Activated T-helper 1 cell treated with anti-CD3 and anti-CD28 coated beads, Interleukin-12 subunit alpha, Interleukin-12 subunit beta, Interleukin-2, Interleukin-4 antibody, amounts not matched to agents 30 ng/mL and 10 ng/mL and 1 ng/mL, durations not matched to agents 14 hours and 24 hours and 36 hours (primary cell): ENCODE measurements at regions of chr2 and their contacts with region 1.

Region 1: GRCh38 chr2:113138428-113139322 is 11.3 kb downstream of the IL1RN start:
- DNase-seq: peak; percentile 64
- H3K4me3 Mint-ChIP-seq: peak overlapping the region; percentile 11
- H3K27ac Mint-ChIP-seq: peak overlapping the region; percentile 51
- H3K4me1 Mint-ChIP-seq: peaks cover 35% of the 10 kb centered on the region
- H3K27me3 Mint-ChIP-seq: peaks cover 6% of the 10 kb centered on the region

Region 2: DNA sequence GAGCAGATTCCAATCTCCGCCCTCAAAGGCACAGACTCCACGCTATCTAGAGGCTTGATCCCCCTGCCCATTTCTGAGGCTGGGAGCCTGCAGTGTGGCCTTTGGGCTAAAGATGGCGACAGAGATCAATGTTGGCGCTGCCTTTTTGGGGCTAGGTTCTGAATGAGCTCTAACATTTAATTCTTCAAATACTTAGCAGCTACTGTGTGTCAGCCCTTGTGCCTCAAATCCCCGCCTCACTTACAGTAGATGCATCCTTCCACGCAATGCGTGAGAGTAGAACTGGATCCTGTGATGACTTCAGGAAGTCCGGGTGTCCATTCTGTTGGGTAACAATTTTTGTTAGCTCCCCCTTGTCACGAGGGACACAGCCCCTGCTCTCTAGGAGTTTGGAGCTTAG is 58.5 kb before region 1 on chr2:
- intact Hi-C with region 1: loop called (anchors 1 kb)
- DNase-seq: peak; percentile 28
- H3K4me3 Mint-ChIP-seq: no peak overlapping the region
- H3K27ac Mint-ChIP-seq: no peak overlapping the region
- H3K4me1 Mint-ChIP-seq: peaks cover 17% of the 10 kb centered on the region
- H3K27me3 Mint-ChIP-seq: peaks cover 2% of the 10 kb centered on the region

Region 3: DNA sequence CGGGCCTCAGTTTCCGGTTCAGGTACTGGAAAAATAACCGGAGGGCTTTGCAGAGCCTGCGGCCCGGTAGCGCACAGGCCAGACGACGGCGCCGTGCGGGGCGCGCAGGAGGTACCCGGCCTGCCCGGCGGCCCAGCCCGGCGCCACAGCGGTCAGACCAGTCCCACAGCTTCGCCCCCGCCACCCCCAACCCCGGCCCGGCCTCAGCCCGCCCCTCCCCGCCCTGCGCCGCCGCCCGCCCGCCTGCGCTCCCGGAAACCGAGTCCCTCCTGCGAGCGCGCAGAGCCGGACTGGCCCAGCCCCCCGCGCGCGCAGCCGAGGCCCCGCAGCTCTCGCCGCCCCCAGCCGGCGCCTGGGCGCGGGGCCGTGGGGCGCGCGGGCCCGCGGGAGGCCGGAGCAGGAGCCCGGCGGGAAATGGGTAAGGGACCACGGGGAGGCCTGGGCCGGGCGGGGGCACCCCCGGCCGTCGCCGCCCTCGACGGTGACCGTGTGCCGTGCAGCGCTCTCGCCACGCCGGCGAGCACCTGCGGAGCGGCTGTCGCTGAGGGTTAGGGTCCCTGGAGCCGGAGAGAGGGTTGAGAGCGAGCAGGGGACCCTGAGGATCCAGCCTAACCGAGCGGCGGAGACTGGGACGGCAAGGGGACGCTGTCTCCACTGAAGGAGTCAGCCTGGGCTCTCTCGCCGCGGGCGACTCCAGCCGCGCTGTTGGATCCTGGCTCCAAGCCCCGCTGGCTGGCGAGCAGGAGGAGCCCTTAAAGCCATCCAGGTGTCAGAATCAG is 18.6 kb after region 1 on chr2:
- intact Hi-C with region 1: loop called (anchors 1 kb)
- DNase-seq: peak; percentile 48
- H3K4me3 Mint-ChIP-seq: peak overlapping the region; percentile 80
- H3K27ac Mint-ChIP-seq: peak overlapping the region; percentile 55
- H3K4me1 Mint-ChIP-seq: peaks cover 33% of the 10 kb centered on the region
- H3K27me3 Mint-ChIP-seq: no peaks in the 10 kb centered on the region

Region 4: GRCh38 chr2:113198790-113199612 is 60.3 kb after region 1 on chr2:
- intact Hi-C with region 1: loop called (anchors 1 kb)
- DNase-seq: peak; percentile 70
- H3K4me3 Mint-ChIP-seq: no peak overlapping the region
- H3K27ac Mint-ChIP-seq: peak overlapping the region; percentile 40
- H3K4me1 Mint-ChIP-seq: peaks cover 45% of the 10 kb centered on the region
- H3K27me3 Mint-ChIP-seq: no peaks in the 10 kb centered on the region

Region 5: DNA sequence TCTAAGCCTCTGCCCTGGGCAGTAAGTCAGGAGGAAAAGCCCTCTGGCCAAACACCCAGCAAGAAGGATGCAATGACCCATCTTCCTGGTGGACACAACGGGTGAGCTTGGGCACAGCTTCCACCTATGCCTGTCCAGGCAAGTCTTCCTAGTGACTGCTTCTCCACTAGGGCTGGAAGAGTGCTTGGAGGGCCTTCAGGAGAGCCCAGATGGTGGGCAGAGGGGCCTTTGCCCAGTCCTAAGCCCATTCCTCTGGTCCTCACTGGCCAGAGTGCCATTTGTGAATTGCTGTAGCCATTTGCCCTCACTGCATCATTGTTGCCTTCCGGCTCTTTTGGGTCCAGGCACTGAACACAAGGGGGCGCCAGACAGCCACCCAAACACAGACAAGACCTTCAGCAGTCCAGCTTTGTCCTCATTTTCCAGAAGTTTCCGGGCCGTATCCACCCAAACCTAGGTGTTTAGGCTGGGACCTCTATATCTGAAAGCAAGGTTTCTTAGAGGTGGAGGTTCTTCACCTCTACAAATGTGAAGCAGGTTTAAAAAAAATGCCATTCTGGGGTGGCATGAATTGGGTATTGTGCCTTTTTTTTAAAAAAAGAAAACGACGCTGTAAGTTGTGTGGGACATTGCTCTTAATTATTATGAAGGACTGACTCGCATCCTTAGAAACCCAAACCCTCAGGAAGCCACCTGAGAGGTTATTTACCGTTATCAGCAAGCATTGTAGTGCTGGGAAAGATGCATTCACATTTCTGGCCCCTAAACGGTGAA is 110.5 kb after region 1 on chr2:
- intact Hi-C with region 1: loop called (anchors 5 kb)
- DNase-seq: peak; percentile 63
- H3K4me3 Mint-ChIP-seq: no peak overlapping the region
- H3K27ac Mint-ChIP-seq: peak overlapping the region; percentile 56
- H3K4me1 Mint-ChIP-seq: peaks cover 46% of the 10 kb centered on the region
- H3K27me3 Mint-ChIP-seq: no peaks in the 10 kb centered on the region

Region 6: GRCh38 chr2:113390124-113390849 is 251.6 kb after region 1 on chr2:
- intact Hi-C with region 1: loop called (anchors 5 kb)
- DNase-seq: peak; percentile 48
- H3K4me3 Mint-ChIP-seq: peak overlapping the region; percentile 53
- H3K27ac Mint-ChIP-seq: peak overlapping the region; percentile 65
- H3K4me1 Mint-ChIP-seq: peaks cover 16% of the 10 kb centered on the region
- H3K27me3 Mint-ChIP-seq: peaks cover 29% of the 10 kb centered on the region